IMR-90 (cell line): ENCODE measurements at regions of chr9 and their contacts with region 1.

Region 1: GRCh38 chr9:69519470-69520240 is 152.5 kb downstream of the APBA1 start:
- DNase-seq: no peak
- ATAC-seq: no peak
- H3K4me3 ChIP-seq: no peak overlapping the region
- H3K27ac ChIP-seq: no peak overlapping the region
- H3K4me1 ChIP-seq: no peaks in the 10 kb centered on the region
- H3K27me3 ChIP-seq: no peaks in the 10 kb centered on the region
- CTCF ChIP-seq: no peak
- POLR2A ChIP-seq: no peak
- RAD21 ChIP-seq: no peak

Region 2: DNA sequence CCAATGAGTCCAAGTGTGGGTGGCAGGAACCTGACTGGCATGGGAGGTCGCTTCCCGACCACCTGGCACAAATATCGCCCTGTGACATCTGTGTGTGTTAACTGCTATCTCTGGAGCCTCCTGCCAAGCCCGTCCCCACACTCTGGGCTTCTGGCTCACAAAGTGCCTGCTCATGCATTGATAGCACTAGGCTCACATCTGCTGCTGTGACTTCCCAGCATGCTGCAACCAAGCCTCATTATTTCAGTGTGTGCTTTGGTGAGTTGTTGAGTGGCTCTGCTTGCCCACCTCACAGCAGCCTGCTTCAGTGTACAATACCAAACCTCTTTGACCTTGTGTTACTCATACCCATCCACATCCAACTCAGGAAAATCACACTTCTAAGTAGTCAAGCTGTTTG is 12.7 kb after region 1 on chr9:
- CTCF ChIA-PET with region 1: no interaction called
- POLR2A ChIA-PET with region 1: no interaction called
- dilution Hi-C with region 1: no loop called
- in situ Hi-C with region 1: no loop called
- intact Hi-C with region 1: loop called (anchors 2 kb)
- DNase-seq: peak; percentile 35
- ATAC-seq: peak; percentile 50
- H3K4me3 ChIP-seq: no peak overlapping the region
- H3K27ac ChIP-seq: no peak overlapping the region
- H3K4me1 ChIP-seq: no peaks in the 10 kb centered on the region; the same call in none of the 2 replicates
- H3K27me3 ChIP-seq: no peaks in the 10 kb centered on the region
- CTCF ChIP-seq: no peak
- POLR2A ChIP-seq: no peak
- RAD21 ChIP-seq: no peak